ENCODE measurements at regions of chr22 and their contacts with region 1.

Region 1: GRCh38 chr22:20116951-20117645 is at the start of gene TRMT2A:
- DNase-seq: peak; percentile 95
- ATAC-seq: peak; percentile 80
- H3K4me3 ChIP-seq: peak within 1 kb of the TSS; percentile 87 to 94 (median 90)
- H3K27ac ChIP-seq: peak within 1 kb of the TSS; percentile 83
- H3K4me1 ChIP-seq: peaks cover 57% of the 10 kb centered on the region
- H3K27me3 ChIP-seq: no peaks in the 10 kb centered on the region; a peak in 1 of 5 replicates
- CTCF ChIP-seq: peak; percentile 65
- EP300 ChIP-seq: peak in 1 of 2 experiments; percentile 68; a peak in 3 of 4 replicates
- POLR2A ChIP-seq: peak in 1 of 2 experiments; percentile 60; a peak in 2 of 4 replicates
- RAD21 ChIP-seq: peak; percentile 40
- total RNA-seq, gene TRMT2A: 18.4 and 30.3 TPM in 2 replicates

Region 2: DNA sequence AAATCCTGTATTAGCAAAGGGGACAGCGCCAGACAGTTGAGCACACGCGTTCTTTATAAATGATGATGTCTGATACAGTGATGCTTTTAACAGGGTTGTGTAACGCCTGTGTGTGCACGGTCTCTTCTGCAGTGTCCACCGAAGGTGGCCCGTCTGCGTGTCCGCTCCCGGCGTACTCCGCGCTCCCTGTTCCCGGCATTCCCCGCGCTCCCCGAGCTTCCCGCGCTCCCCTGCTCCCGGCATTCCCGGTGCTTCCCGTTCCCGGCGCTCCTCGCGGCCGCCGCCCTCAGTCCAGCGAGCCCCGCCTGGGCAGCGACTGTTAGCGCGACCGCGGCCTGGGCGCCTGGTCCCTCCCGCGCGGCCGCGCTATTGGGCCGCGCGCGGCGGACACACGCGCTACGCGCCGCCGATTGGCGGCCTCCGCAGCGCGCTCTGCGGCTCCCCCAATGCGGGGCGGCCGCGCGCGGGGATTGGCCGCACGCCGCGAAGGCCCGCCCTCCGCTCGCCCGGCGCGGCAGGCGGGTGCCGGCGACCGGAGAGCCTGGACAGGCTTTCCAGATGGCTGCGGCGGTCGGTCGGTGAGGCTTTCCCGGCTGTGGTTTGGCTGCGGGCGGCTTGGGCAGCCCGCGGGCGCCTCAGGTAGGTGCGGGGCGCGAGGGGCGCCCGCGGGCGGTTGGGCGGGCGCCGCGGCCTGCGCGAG is 37.2 kb before region 1 on chr22 and contains the start of gene DGCR8:
- CTCF ChIA-PET with region 1: no interaction called
- POLR2A ChIA-PET with region 1: interaction called, 4 read pairs
- in situ Hi-C with region 1: no loop called
- intact Hi-C with region 1: loop called (anchors 5 kb)
- DNase-seq: peak; percentile 86
- ATAC-seq: peak; percentile 87
- H3K4me3 ChIP-seq: peak within 1 kb of the TSS; percentile 66 to 87 (median 75)
- H3K27ac ChIP-seq: peak within 1 kb of the TSS; percentile 85
- H3K4me1 ChIP-seq: peaks cover 51% of the 10 kb centered on the region
- H3K27me3 ChIP-seq: no peaks in the 10 kb centered on the region; a peak in 2 of 5 replicates
- CTCF ChIP-seq: no peak; the same call in 1 of the 2 replicates
- EP300 ChIP-seq: peak in 1 of 2 experiments; percentile 45; a peak in 1 of 4 replicates
- POLR2A ChIP-seq: peak; percentile 90 to 95
- RAD21 ChIP-seq: peak; percentile 13; the same call in 1 of the 2 replicates
- total RNA-seq, gene DGCR8: 14.8 and 23.2 TPM in 2 replicates

Region 3: GRCh38 chr22:20128902-20129746 is 12.0 kb after region 1 on chr22:
- CTCF ChIA-PET with region 1: no interaction called
- POLR2A ChIA-PET with region 1: interaction called, 15 read pairs
- in situ Hi-C with region 1: no loop called
- intact Hi-C with region 1: loop called (anchors 1 kb)
- DNase-seq: peak; percentile 49
- ATAC-seq: peak; percentile 56
- H3K4me3 ChIP-seq: peak overlapping the region in 1 of 3 experiments; percentile 51; a peak in 1 of 6 replicates
- H3K27ac ChIP-seq: peak overlapping the region; percentile 61
- H3K4me1 ChIP-seq: peaks cover 45% of the 10 kb centered on the region
- H3K27me3 ChIP-seq: no peaks in the 10 kb centered on the region
- CTCF ChIP-seq: peak; percentile 87
- EP300 ChIP-seq: peak in 1 of 2 experiments; percentile 72; a peak in 3 of 4 replicates
- POLR2A ChIP-seq: peak in 1 of 2 experiments; percentile 71; a peak in 2 of 4 replicates
- RAD21 ChIP-seq: peak; percentile 65

Measured in HepG2 (cell line).